PC-9 (cell line): ENCODE measurements at regions of chr17 and their contacts with region 1.

Region 1: GRCh38 chr17:60525685-60526514 is at the start of gene APPBP2:
- DNase-seq: peak; percentile 67 to 76
- H3K4me3 ChIP-seq: peak within 1 kb of the TSS; percentile 91
- H3K27ac ChIP-seq: peak within 1 kb of the TSS; percentile 83
- H3K4me1 ChIP-seq: peaks cover 11% of the 10 kb centered on the region
- H3K27me3 ChIP-seq: no peaks in the 10 kb centered on the region
- CTCF ChIP-seq: no peak
- total RNA-seq, gene APPBP2: 27.5 and 32.5 TPM in 2 replicates

Region 2: GRCh38 chr17:60571551-60571950 is 45.7 kb after region 1 on chr17:
- CTCF ChIA-PET with region 1: no interaction called
- POLR2A ChIA-PET with region 1: no interaction called
- intact Hi-C with region 1: loop called (anchors 1 kb)
- DNase-seq: no peak
- H3K4me3 ChIP-seq: no peak overlapping the region
- H3K27ac ChIP-seq: no peak overlapping the region
- H3K4me1 ChIP-seq: no peaks in the 10 kb centered on the region
- H3K27me3 ChIP-seq: no peaks in the 10 kb centered on the region
- CTCF ChIP-seq: no peak

Region 3: DNA sequence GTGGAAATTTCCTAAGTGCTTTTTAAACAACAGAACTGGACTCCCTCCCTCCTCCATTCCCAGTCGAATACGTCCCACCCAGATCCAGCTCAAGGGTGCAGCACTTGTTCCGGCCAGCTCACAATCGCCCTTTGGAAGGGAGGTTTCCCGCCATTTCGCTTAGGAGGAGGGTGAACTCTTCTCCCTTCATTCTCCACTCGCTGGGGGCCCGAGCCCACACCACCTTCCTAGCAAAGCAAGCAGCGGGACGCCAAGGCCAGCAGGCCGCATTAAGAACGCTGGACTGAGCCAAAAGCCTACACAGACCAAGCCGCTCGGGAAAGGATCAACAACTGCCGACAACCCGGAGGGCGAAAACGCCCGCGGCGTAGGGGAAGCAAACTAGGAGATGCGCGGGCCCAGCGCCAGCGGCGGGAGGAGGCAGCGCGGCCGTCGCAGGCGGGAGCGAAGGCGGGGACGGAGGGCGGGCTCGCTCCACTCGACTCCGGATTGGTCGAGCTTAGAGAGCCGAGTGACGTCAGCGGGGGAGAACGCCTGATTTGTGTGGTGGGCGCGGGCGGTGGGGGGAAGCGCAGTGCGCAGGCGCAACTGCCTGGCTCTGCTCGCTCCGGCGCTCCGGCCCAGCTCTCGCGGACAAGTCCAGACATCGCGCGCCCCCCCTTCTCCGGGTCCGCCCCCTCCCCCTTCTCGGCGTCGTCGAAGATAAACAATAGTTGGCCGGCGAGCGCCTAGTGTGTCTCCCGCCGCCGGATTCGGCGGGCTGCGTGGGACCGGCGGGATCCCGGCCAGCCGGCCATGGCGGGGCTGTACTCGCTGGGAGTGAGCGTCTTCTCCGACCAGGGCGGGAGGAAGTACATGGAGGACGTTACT is 74.0 kb after region 1 on chr17 and contains the start of gene PPM1D:
- CTCF ChIA-PET with region 1: interaction called, 4 read pairs
- POLR2A ChIA-PET with region 1: interaction called, 3 read pairs
- intact Hi-C with region 1: loop called (anchors 5 kb)
- DNase-seq: peak; percentile 93 to 98
- H3K4me3 ChIP-seq: peak within 1 kb of the TSS; percentile 87
- H3K27ac ChIP-seq: peak within 1 kb of the TSS; percentile 64
- H3K4me1 ChIP-seq: peaks cover 26% of the 10 kb centered on the region
- H3K27me3 ChIP-seq: no peaks in the 10 kb centered on the region
- CTCF ChIP-seq: no peak
- total RNA-seq, gene PPM1D: 10.4 and 12.1 TPM in 2 replicates